K562 (cell line): ENCODE measurements at regions of chr1 and their contacts with region 1.

Region 1: GRCh38 chr1:107976836-107977235 is 11.9 kb upstream of the VAV3 start:
- DNase-seq: no peak
- ATAC-seq: no peak
- H3K4me3 ChIP-seq: no peak overlapping the region
- H3K27ac ChIP-seq: no peak overlapping the region
- H3K4me1 ChIP-seq: no peaks in the 10 kb centered on the region
- H3K27me3 ChIP-seq: no peaks in the 10 kb centered on the region; a peak in 2 of 5 replicates
- CTCF ChIP-seq: no peak
- EP300 ChIP-seq: no peak
- POLR2A ChIP-seq: no peak
- RAD21 ChIP-seq: no peak

Region 2: GRCh38 chr1:107862064-107862463 is 114.8 kb before region 1 on chr1:
- CTCF ChIA-PET with region 1: no interaction called
- POLR2A ChIA-PET with region 1: no interaction called
- in situ Hi-C with region 1: no loop called
- intact Hi-C with region 1: no loop called
- DNase-seq: no peak
- ATAC-seq: no peak
- H3K4me3 ChIP-seq: no peak overlapping the region
- H3K27ac ChIP-seq: no peak overlapping the region
- H3K4me1 ChIP-seq: no peaks in the 10 kb centered on the region
- H3K27me3 ChIP-seq: no peaks in the 10 kb centered on the region
- CTCF ChIP-seq: no peak
- EP300 ChIP-seq: no peak
- POLR2A ChIP-seq: no peak
- RAD21 ChIP-seq: no peak

Region 3: DNA sequence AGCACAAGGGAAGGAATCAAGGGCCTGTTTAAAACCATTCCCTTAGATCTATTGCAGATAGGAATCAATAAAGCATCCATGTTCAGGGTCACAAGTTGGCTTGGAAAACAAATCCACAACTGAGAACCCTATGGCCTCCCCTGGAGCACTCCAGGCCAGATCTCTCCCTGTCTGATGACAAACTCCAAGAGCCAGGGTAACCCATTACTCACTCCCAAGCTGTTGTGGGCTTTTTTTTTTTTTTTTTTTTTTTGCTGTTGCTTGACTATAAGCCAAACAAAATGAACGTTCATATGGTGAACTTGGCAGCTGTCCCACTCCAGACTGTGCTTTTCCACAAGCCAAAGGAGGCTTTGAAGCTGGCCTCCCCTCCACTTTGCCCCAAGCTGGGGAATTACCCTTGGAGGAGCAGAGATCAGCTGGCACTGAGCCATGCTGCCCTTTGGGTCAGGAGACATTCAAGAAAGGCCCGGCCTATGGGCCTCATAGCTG is 23.8 kb after region 1 on chr1:
- CTCF ChIA-PET with region 1: no interaction called
- POLR2A ChIA-PET with region 1: no interaction called
- in situ Hi-C with region 1: no loop called
- intact Hi-C with region 1: loop called (anchors 1 kb)
- DNase-seq: no peak
- ATAC-seq: no peak
- H3K4me3 ChIP-seq: no peak overlapping the region
- H3K27ac ChIP-seq: no peak overlapping the region
- H3K4me1 ChIP-seq: no peaks in the 10 kb centered on the region
- H3K27me3 ChIP-seq: peaks cover 0 to 4% of the 10 kb centered on the region in 2 experiments; a peak in 2 of 5 replicates
- CTCF ChIP-seq: no peak
- EP300 ChIP-seq: no peak
- POLR2A ChIP-seq: no peak
- RAD21 ChIP-seq: no peak